ENCODE measurements at regions of chr9 and their contacts with region 1.

Region 1: GRCh38 chr9:98263482-98264357 is 8.3 kb upstream of the TBC1D2 start:
- DNase-seq: peak; percentile 89
- ATAC-seq: peak; percentile 99
- H3K4me3 Mint-ChIP-seq: no peak overlapping the region
- H3K27ac Mint-ChIP-seq: no peak overlapping the region
- H3K4me1 Mint-ChIP-seq: no peaks in the 10 kb centered on the region
- H3K27me3 Mint-ChIP-seq: no peaks in the 10 kb centered on the region
- CTCF ChIP-seq: peak; percentile 82

Region 2: GRCh38 chr9:98101868-98102273 is 161.8 kb before region 1 on chr9:
- CTCF ChIA-PET with region 1: interaction called, 4 read pairs
- POLR2A ChIA-PET with region 1: no interaction called
- intact Hi-C with region 1: loop called (anchors 10 kb)
- DNase-seq: peak; percentile 89
- ATAC-seq: peak; percentile 97
- H3K4me3 Mint-ChIP-seq: peak overlapping the region; percentile 66
- H3K27ac Mint-ChIP-seq: peak overlapping the region; percentile 95
- H3K4me1 Mint-ChIP-seq: peaks cover 77% of the 10 kb centered on the region
- H3K27me3 Mint-ChIP-seq: no peaks in the 10 kb centered on the region
- CTCF ChIP-seq: no peak

Region 3: DNA sequence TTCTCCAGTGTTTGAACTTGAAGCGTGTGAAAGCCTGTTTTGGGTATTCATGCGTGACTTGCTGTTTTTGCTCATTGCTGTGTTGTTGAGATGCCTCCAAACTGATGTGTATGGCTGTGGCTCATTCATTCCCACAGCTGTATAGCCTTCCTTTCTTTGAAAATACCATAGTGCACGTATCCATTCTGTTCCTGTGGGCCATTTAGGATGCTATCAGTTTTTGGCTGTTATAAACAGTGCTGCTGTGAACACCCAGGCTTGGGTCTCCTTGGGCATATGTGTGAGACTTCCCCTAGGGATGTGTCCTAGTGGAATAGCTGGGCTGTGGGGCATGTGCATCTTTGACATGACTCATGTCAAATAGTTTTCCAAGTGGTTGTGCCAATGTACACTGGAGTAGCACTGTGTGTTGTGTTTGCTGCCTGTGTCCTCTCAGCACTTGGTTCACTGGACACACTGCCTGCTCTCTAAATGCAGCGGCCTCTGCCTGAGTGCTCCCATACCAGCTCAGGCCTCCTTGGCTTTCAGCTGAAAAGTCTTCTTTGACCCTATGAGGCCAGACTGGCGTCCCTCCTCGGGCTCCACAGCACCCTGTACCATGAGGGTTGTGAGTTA is 94.3 kb after region 1 on chr9:
- CTCF ChIA-PET with region 1: no interaction called
- POLR2A ChIA-PET with region 1: no interaction called
- intact Hi-C with region 1: no loop called
- DNase-seq: no peak
- ATAC-seq: no peak
- H3K4me3 Mint-ChIP-seq: no peak overlapping the region
- H3K27ac Mint-ChIP-seq: no peak overlapping the region
- H3K4me1 Mint-ChIP-seq: no peaks in the 10 kb centered on the region
- H3K27me3 Mint-ChIP-seq: peaks cover 6% of the 10 kb centered on the region
- CTCF ChIP-seq: no peak

Region 4: GRCh38 chr9:98391867-98392266 is 128.1 kb after region 1 on chr9:
- CTCF ChIA-PET with region 1: no interaction called
- POLR2A ChIA-PET with region 1: no interaction called
- intact Hi-C with region 1: no loop called
- DNase-seq: no peak
- ATAC-seq: peak; percentile 49
- H3K4me3 Mint-ChIP-seq: no peak overlapping the region
- H3K27ac Mint-ChIP-seq: peak overlapping the region; percentile 42
- H3K4me1 Mint-ChIP-seq: peaks cover 6% of the 10 kb centered on the region
- H3K27me3 Mint-ChIP-seq: peaks cover 2% of the 10 kb centered on the region
- CTCF ChIP-seq: no peak

Measured in activated CD8-positive, alpha-beta T cell treated with anti-CD3 and anti-CD28 coated beads for 36 hours (primary cell).